Right ventricle myocardium superior (tissue), 1 donor: ENCODE measurements at regions of chr2 and their contacts with region 1.

Region 1: GRCh38 chr2:86079981-86080911 is 25.4 kb downstream of the POLR1A start:
- DNase-seq: peak; percentile 89
- ATAC-seq: peak; percentile 92

Region 2: DNA sequence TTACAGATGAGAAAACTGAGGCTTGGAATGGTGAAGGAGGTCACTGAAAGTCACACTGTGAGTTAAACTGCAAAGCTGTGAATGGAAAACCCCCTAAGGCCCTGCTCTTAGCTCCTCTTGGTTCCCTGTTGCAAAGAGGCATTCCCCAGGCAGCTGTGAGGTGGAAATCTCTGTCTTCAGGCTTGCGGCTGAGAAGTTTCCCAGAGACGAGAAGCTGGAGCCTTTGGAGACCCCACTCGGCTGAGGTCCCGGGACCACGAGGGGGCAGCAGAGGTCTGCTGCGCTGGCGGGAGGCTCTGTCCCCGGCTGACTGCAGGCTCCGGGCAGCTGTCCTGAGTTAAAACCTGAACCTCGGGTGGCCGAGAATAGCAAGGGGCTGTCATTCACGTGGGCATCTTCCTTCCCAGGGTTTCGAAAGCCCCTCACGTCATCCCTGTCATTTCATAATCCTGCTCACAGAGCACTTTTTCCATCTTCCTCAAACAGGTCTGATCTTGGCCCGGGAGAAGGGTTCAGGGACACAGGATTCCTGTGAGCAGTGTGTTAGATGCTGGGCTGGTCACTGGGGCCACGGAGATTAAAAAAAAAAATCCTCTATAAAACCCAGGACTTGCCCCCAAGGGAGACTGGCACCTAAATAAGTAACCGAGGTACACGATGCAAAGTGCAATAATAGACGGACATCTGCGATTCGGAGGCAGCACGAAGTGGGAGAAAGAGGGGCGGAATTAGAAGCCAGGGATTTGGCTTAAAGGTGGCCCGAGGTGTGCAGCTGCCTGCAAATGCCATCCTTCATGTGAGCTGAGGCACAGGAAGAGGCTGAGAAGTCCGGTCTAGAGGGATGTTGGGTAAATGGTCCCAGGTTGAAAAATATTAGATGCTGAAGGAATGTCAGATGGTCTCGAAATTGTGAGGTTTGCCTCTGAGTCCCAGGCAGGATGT is 351.1 kb before region 1 on chr2:
- intact Hi-C with region 1: loop called (anchors 10 kb)
- DNase-seq: peak; percentile 94
- ATAC-seq: peak; percentile 97

Region 3: GRCh38 chr2:85826990-85827878 is 253.0 kb before region 1 on chr2:
- intact Hi-C with region 1: loop called (anchors 2 kb)
- DNase-seq: peak; percentile 88
- ATAC-seq: peak; percentile 97

Region 4: DNA sequence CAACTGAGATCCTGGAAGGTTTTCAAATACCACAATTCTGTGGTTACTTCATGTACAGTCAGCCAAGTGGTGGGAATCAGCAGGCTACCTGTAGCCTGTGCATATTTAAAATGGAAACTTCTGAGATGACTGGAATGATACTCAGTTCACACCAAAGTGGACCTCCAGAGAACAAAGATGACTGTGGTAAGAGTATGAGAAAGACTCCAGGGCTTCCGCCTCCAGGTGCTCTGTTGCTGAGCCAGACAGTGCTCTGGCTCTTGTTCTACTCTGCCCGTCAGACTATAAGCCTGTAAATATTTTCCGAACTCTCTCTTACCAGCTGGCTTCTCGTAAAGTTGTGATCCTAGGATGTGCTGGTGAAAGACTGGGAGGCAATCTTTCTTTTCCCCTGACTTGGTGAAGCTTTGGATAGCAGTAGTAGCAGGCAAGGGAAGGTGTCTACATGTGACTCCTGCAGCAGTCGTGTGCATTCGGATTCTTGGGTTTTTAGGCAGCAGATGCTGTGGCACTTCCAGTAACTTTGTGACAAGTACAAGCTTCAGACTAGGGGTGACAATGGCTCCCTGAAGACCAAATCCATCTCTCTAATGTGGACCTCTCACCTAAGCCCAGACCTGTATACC is 214.6 kb before region 1 on chr2:
- intact Hi-C with region 1: no loop called
- DNase-seq: no peak
- ATAC-seq: no peak

Region 5: GRCh38 chr2:85888684-85889626 is 191.3 kb before region 1 on chr2 and contains the start of gene ST3GAL5:
- intact Hi-C with region 1: loop called (anchors 5 kb)
- DNase-seq: peak; percentile 96
- ATAC-seq: peak; percentile 92
- total RNA-seq, gene ST3GAL5: 5.0 TPM